Mammary epithelial cell (primary cell): ENCODE measurements at regions of chr19 and their contacts with region 1.

Region 1: GRCh38 chr19:34359140-34359953 is 5.6 kb upstream of the GPI start:
- DNase-seq: peak; percentile 97
- H3K4me3 ChIP-seq: peak overlapping the region; percentile 32 to 53 (median 50)
- H3K27ac ChIP-seq: peak overlapping the region; percentile 68
- H3K4me1 ChIP-seq: peaks cover 15% of the 10 kb centered on the region
- H3K27me3 ChIP-seq: no peaks in the 10 kb centered on the region
- CTCF ChIP-seq: peak; percentile 35 to 55

Region 2: GRCh38 chr19:34430738-34431625 is 71.6 kb after region 1 on chr19:
- CTCF ChIA-PET with region 1: no interaction called
- dilution Hi-C with region 1: no loop called
- in situ Hi-C with region 1: no loop called
- intact Hi-C with region 1: loop called (anchors 2 kb)
- DNase-seq: peak; percentile 45
- H3K4me3 ChIP-seq: peak overlapping the region in 2 of 3 experiments; percentile 79 to 90
- H3K27ac ChIP-seq: no peak overlapping the region
- H3K4me1 ChIP-seq: peaks cover 24% of the 10 kb centered on the region
- H3K27me3 ChIP-seq: no peaks in the 10 kb centered on the region
- CTCF ChIP-seq: peak; percentile 77 to 82